Heart right ventricle (tissue), 16 donors: ENCODE measurements at regions of chr7 and their contacts with region 1.

Region 1: DNA sequence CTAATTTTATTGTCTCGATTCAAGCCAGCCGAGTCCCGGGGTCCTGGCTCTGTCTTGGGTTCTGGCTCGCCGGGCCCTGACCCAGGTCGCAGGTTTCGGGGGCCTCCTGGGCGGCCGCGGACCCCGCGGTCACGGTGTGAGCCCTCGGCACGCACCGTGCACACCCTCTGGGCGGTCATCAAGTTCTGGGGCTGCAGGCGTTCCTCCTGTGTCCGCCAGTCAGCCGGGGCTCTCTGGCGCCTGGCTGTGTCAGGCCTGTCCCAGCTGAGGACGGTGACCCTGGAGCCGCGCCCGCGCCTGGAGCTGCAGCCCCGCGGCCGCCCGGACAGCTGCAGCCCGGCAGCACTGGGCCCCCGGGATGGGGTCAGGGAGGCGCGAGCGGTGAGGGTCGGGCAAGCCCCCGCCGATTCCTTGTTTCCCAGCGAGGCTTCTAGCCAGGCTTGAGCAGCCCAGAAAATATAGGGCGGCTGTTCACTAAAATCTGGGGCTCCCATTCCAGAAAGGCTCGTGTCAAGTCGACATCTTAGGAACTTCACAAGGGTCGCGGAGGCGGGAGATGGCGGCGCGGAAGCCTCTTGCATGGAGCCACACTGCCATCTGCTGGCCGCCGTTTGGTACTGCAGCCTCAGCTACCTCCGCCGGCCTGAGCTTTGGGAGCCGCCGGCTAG is 4.2 kb upstream of the HOXA7 start:
- DNase-seq: peak; percentile 78 to 80
- ATAC-seq: peak; percentile 73 to 89 (median 83)
- H3K4me3 ChIP-seq: peak overlapping the region; percentile 36 to 75 (median 58)
- H3K27ac ChIP-seq: peak overlapping the region in 1 of 10 donors; percentile 15
- H3K4me1 ChIP-seq: peaks cover 8 to 77% (median 31%) of the 10 kb centered on the region in 9 donors
- H3K27me3 ChIP-seq: peaks cover 74 to 100% (median 100%) of the 10 kb centered on the region in 7 donors
- CTCF ChIP-seq: peak; percentile 99 to 100 (median 100)

Region 2: GRCh38 chr7:25877802-25878789 is 1282.6 kb before region 1 on chr7:
- intact Hi-C with region 1: loop called in 2 of 10 experiments (anchors 10 kb)
- DNase-seq: no peak
- ATAC-seq: no peak
- H3K4me3 ChIP-seq: no peak overlapping the region
- H3K27ac ChIP-seq: no peak overlapping the region
- H3K4me1 ChIP-seq: no peaks in the 10 kb centered on the region
- H3K27me3 ChIP-seq: peaks cover 0 to 95% (median 78%) of the 10 kb centered on the region in 7 donors
- CTCF ChIP-seq: no peak

Region 3: DNA sequence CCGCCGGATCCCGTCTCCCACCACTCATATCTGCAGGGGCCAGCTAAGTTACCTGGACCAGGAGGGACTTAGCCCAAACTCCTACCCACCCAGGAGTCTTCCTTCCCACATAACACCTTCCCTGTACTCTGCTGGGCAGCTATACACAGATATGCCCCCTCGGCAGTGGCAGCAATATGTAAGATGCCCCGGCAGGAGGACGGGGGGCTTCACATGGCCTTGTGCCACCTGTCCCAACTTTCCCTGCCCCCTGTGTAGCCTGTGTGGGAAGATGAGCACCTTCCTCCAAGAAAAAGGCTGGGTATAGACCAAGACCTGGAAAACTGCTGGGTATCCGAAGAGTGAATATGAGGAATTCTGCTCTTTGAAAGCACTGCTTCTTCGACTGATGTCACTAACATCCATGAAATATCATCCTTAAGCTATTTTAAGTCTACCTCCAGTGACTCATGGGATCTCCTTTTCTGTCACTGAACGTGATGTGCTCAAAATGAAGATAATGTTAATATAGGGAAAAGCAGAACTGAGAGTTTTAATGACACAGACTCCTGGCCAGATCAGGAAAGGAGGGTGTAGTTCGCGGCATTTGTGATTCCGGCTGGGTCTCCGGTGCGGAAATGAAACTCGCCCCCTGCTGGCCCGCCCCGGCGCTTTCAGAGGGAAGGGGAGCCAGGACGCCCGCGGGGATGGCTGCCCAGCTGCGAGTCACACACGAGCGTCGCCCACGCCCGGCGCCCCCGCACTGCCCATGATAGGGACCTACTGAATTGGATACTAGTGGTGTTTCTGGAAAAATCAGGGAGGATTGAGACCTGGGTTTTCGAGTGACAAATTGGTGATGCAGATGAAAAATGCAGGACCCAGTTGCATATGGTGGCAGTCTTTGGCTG is 1265.5 kb before region 1 on chr7:
- intact Hi-C with region 1: loop called in 4 of 10 experiments (anchors 10 kb)
- DNase-seq: peak; percentile 49 to 70
- ATAC-seq: peak; percentile 65 to 87 (median 74)
- H3K4me3 ChIP-seq: peak overlapping the region in 7 of 10 donors; percentile 1 to 35 (median 26)
- H3K27ac ChIP-seq: no peak overlapping the region
- H3K4me1 ChIP-seq: peaks cover 0 to 20% (median 7%) of the 10 kb centered on the region in 9 donors
- H3K27me3 ChIP-seq: peaks cover 5 to 74% (median 42%) of the 10 kb centered on the region in 7 donors
- CTCF ChIP-seq: peak; percentile 12 to 77 (median 67)

Region 4: GRCh38 chr7:26365077-26365900 is 795.4 kb before region 1 on chr7:
- intact Hi-C with region 1: loop called in 9 of 10 experiments (anchors 2 to 5 kb)
- DNase-seq: peak in 1 of 2 donors; percentile 57
- ATAC-seq: peak; percentile 65 to 89 (median 80)
- H3K4me3 ChIP-seq: no peak overlapping the region
- H3K27ac ChIP-seq: no peak overlapping the region
- H3K4me1 ChIP-seq: peaks cover 0 to 26% (median 0%) of the 10 kb centered on the region in 9 donors
- H3K27me3 ChIP-seq: peaks cover 0 to 62% (median 40%) of the 10 kb centered on the region in 7 donors
- CTCF ChIP-seq: peak; percentile 53 to 87 (median 77)

Region 5: GRCh38 chr7:26388256-26388655 is 772.4 kb before region 1 on chr7:
- intact Hi-C with region 1: loop called in 1 of 10 experiments (anchors 5 kb)
- DNase-seq: no peak
- ATAC-seq: no peak
- H3K4me3 ChIP-seq: no peak overlapping the region
- H3K27ac ChIP-seq: no peak overlapping the region
- H3K4me1 ChIP-seq: no peaks in the 10 kb centered on the region
- H3K27me3 ChIP-seq: peaks cover 0 to 94% (median 80%) of the 10 kb centered on the region in 7 donors
- CTCF ChIP-seq: no peak

Region 6: DNA sequence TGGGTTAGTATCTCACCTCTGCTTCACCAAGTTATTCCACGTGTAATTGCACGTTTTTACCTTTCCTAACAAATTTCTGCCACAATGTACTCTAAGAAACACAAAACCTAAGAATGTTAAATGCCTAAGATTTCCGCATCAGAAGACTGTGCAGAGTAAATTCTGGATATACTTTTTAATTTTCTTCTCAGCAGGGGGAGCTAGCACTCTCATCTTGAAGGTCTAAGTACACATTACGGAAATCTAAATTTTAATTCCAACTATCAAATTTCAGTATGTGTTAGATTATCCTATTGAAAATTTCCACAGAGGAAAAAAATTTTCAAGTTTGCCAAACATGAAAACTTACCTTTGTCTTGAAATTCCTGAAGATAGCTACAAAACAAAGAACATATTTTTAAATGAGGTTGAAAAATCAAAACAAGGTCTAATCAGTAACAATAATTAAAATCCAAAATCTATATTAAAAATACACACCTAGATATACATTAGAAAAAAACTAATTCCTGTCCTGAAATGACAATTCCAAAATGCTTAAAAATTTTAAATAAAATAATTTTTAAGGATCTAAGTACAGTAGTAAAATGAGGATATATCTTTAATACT is 306.8 kb before region 1 on chr7:
- intact Hi-C with region 1: loop called in 3 of 10 experiments (anchors 10 kb)
- DNase-seq: no peak
- ATAC-seq: no peak
- H3K4me3 ChIP-seq: no peak overlapping the region
- H3K27ac ChIP-seq: no peak overlapping the region
- H3K4me1 ChIP-seq: peaks cover 0 to 16% (median 0%) of the 10 kb centered on the region in 9 donors
- H3K27me3 ChIP-seq: peaks cover 0 to 73% (median 58%) of the 10 kb centered on the region in 7 donors
- CTCF ChIP-seq: peak; percentile 16 to 65 (median 52)

Region 7: DNA sequence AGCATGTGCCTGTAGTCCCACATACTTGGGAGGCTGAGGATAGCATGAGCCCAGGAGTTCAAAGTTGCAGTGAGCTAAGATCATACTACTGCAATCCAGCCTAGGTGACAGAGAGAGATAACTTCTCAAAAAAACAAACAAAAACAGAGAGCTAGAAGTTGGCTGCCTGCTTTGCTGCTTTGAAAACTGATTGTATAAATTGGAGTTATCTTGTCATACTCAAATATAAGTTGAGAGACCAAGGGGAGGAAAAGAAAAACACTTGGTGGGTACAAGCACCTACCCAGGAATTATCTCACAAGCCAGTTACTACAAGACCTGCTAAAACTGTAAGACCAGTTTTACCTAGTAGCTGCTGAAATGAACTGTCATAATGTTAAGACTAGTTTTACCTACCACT is 183.8 kb before region 1 on chr7:
- intact Hi-C with region 1: no loop called
- DNase-seq: no peak
- ATAC-seq: no peak
- H3K4me3 ChIP-seq: no peak overlapping the region
- H3K27ac ChIP-seq: no peak overlapping the region
- H3K4me1 ChIP-seq: no peaks in the 10 kb centered on the region
- H3K27me3 ChIP-seq: peaks cover 0 to 28% (median 0%) of the 10 kb centered on the region in 7 donors
- CTCF ChIP-seq: no peak